PC-3 (cell line): ENCODE measurements at regions of chr6 and their contacts with region 1.

Region 1: DNA sequence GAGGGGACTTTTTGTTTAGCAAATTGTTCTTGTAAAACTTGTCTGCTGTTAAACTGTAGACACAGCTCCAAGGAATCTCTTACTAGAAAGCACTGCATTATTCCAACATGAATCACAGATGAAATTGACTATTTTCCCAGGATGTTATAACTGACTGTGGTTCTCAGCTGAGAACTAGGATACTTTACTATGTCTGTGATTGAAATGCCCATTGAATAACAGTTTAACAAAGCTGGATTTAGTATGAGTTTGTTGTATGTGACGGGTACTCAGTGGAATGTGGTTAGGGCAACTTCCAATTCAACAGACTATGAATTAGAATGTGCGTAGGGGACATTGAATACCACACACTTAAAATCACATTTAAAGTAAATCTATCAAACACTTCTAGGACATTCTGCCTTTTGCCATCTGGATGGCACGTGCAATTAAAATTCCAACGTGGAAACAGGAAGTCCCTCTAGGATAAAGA is 193.4 kb upstream of the PREP start:
- DNase-seq: peak; percentile 95
- ATAC-seq: peak; percentile 70
- H3K4me3 ChIP-seq: no peak overlapping the region
- H3K27ac ChIP-seq: peak overlapping the region; percentile 99
- H3K4me1 ChIP-seq: peaks cover 79% of the 10 kb centered on the region
- H3K27me3 ChIP-seq: no peaks in the 10 kb centered on the region
- CTCF ChIP-seq: no peak

Region 2: DNA sequence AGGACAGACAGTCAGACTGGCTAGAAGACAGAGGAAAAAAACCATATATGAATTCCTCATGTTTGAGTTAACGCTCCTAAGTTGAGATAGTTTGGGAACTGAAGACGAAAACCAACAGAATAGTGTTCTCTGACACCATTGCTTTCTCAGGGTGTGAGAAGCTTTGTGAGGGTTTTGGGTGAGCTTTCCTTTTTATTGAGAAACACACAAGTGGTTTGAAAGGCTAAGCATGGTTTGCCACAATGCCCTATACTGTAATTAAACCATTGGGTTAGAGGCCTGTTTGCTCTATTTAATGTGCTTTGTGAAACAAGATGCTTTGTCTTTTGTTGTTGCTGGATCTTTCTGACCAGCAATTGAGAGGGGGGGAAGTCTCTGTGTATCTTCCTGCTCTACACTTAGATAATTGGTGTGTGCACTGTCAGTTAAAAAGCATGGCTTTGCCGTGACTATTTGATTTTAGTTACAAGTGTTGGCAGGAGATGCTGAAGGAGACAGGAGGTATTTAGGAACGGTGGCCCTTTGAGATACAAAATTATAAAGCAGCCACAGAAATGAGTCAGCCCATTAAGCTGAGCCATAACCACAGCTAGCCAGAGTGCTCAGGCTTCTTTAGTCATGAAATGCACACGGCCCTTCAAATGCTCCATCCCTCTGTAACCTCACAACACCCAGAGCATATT is 79.5 kb after region 1 on chr6:
- CTCF ChIA-PET with region 1: no interaction called
- POLR2A ChIA-PET with region 1: no interaction called
- intact Hi-C with region 1: loop called (anchors 5 kb)
- DNase-seq: peak; percentile 89
- ATAC-seq: peak; percentile 95
- H3K4me3 ChIP-seq: no peak overlapping the region
- H3K27ac ChIP-seq: peak overlapping the region; percentile 66
- H3K4me1 ChIP-seq: peaks cover 35% of the 10 kb centered on the region
- H3K27me3 ChIP-seq: no peaks in the 10 kb centered on the region
- CTCF ChIP-seq: no peak

Region 3: DNA sequence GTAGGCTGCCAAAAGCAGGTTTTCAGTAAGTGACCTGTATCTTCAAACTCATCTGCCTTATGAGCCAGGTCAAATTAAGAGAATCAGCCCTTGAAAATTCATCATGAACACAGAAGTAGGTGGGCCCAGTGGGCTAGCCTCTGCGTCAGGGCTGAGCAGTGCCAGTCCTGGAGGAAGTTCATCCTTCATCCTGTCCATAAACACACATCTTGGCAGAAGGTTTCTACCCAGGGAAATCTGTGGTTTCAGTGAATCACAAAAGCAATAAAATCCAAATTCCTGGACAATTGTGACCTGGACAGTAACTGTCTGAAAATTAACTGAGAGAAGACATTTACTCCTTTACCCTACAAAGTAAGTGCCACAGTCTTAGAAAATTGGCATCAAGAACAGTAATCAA is 656.9 kb after region 1 on chr6:
- CTCF ChIA-PET with region 1: no interaction called
- POLR2A ChIA-PET with region 1: no interaction called
- intact Hi-C with region 1: no loop called
- DNase-seq: peak; percentile 91
- ATAC-seq: peak; percentile 86
- H3K4me3 ChIP-seq: peak overlapping the region; percentile 4; the same call in 1 of the 2 replicates
- H3K27ac ChIP-seq: peak overlapping the region; percentile 65
- H3K4me1 ChIP-seq: peaks cover 59% of the 10 kb centered on the region
- H3K27me3 ChIP-seq: no peaks in the 10 kb centered on the region
- CTCF ChIP-seq: no peak